Spleen (tissue), 13 donors: ENCODE measurements at regions of chr11 and their contacts with region 1.

Region 1: DNA sequence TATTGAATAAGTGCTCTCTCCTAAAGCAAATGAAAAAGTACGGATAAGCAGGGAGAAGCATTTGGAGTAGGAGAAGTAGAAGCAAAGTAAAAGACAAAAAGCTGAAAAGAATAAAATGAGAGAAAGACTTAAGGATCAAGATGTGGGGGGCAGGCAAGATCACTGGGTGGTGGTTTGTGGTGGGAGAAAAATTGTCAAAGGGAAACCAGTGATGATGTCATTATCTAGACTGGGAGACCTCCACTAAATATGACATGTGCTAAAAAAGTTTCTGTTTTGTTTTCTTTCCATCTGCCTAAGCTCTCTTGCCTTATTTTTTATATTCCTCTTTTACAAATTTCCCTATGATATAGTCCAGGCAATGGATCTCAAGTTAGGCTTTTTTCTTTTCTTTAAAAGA is 14.8 kb upstream of the MAML2 start:
- DNase-seq: no peak
- H3K4me3 ChIP-seq: no peak overlapping the region
- H3K27ac ChIP-seq: no peak overlapping the region
- H3K4me1 ChIP-seq: no peaks in the 10 kb centered on the region
- H3K27me3 ChIP-seq: no peaks in the 10 kb centered on the region
- CTCF ChIP-seq: no peak
- POLR2A ChIP-seq: no peak

Region 2: GRCh38 chr11:95835768-95836488 is 521.9 kb before region 1 on chr11:
- intact Hi-C with region 1: loop called (anchors 10 kb)
- DNase-seq: no peak
- H3K4me3 ChIP-seq: no peak overlapping the region
- H3K27ac ChIP-seq: peak overlapping the region in 1 of 8 donors; percentile 12
- H3K4me1 ChIP-seq: peaks cover 0 to 6% (median 0%) of the 10 kb centered on the region in 6 donors
- H3K27me3 ChIP-seq: no peaks in the 10 kb centered on the region
- CTCF ChIP-seq: peak; percentile 54 to 88 (median 81)
- POLR2A ChIP-seq: no peak